CD8-positive, alpha-beta memory T cell (primary cell): ENCODE measurements at regions of chr1 and their contacts with region 1.

Region 1: DNA sequence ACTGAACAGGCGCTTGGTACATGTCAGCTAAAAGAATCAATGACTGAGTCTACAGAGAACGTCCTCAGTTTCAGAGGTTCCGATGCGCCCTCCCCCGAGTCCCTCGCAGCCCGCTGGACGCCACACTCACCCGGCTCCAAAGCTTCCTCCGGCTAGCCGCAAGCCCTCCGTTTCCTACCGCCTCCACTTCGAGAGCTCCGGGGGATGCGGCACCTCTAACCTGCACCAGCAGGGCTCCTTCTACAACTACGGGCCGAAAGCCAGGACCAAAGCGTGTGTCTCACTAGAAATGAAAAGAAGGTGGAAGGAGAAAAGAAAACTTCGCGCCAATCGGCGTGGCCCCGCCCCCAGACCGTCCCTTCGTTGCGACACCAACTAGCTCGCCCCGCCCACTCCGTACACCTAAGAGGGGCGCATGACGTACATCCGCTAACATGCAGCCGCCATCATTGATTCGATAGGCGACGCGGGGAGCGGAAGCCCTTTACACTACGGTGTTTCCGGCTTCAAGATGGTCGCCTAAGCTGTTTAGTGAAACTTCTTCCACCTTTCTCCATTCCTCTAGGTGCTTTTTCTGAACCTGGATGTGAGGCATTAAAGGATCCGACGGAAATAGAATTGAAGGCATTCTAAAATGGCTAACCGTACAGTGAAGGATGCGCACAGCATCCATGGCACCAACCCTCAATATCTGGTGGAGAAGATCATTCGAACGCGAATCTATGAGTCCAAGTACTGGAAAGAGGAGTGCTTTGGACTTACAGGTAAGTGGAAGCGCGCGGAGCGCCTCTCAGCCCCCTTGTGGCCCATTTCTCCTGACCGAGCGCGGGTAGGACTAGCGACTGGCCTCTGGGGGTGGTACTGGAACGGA is at the starts of genes ORC1 and PRPF38A:
- DNase-seq: peak; percentile 94 to 98 (median 96)
- H3K4me3 ChIP-seq: peak within 1 kb of the TSS; percentile 99
- H3K4me3 Mint-ChIP-seq: peak within 1 kb of the TSS; percentile 98 to 100 (median 99)
- H3K27ac ChIP-seq: peak within 1 kb of the TSS; percentile 98
- H3K27ac Mint-ChIP-seq: peak within 1 kb of the TSS; percentile 92 to 100 (median 99)
- H3K4me1 ChIP-seq: peaks cover 18% of the 10 kb centered on the region
- H3K4me1 Mint-ChIP-seq: peaks cover 37 to 51% (median 47%) of the 10 kb centered on the region in 3 donors
- H3K27me3 ChIP-seq: no peaks in the 10 kb centered on the region
- H3K27me3 Mint-ChIP-seq: peaks cover 0 to 2% of the 10 kb centered on the region in 2 donors
- total RNA-seq, gene ORC1: 39.8 to 40.6 TPM
- total RNA-seq, gene PRPF38A: 123 to 126 TPM

Region 2: DNA sequence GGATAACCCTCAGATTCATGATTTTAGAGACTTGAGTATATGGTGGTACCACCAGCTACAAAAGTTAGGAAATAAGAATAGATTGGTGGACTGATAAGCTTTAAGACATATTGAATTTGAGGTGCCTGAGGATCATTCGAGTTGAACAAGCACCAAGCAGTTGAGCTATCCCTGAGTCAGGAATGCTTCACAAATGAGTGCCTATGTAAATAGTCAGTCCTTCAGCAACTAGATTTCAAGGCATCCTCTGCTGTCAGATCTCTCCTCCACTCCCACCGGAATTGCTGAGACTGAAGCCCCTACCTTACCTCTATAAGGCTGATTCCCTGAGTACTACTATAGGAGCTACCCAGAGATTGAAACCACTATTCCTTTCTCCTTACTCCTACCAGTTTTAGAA is 341.2 kb before region 1 on chr1:
- CTCF ChIA-PET with region 1: no interaction called
- POLR2A ChIA-PET with region 1: no interaction called
- DNase-seq: no peak
- H3K4me3 ChIP-seq: no peak overlapping the region
- H3K4me3 Mint-ChIP-seq: no peak overlapping the region
- H3K27ac ChIP-seq: no peak overlapping the region
- H3K27ac Mint-ChIP-seq: peak overlapping the region in 1 of 8 donors; percentile 31
- H3K4me1 ChIP-seq: peaks cover 8% of the 10 kb centered on the region
- H3K4me1 Mint-ChIP-seq: peaks cover 20 to 51% (median 51%) of the 10 kb centered on the region in 3 donors
- H3K27me3 ChIP-seq: no peaks in the 10 kb centered on the region
- H3K27me3 Mint-ChIP-seq: no peaks in the 10 kb centered on the region

Region 3: GRCh38 chr1:52424231-52424636 is 19.9 kb after region 1 on chr1:
- CTCF ChIA-PET with region 1: interaction called, 12 read pairs
- POLR2A ChIA-PET with region 1: interaction called, 24 read pairs
- DNase-seq: peak in 3 of 5 donors; percentile 24 to 69 (median 64)
- H3K4me3 ChIP-seq: peak overlapping the region; percentile 23
- H3K4me3 Mint-ChIP-seq: peak overlapping the region; percentile 15 to 87 (median 74)
- H3K27ac ChIP-seq: peak overlapping the region; percentile 73
- H3K27ac Mint-ChIP-seq: peak overlapping the region; percentile 91 to 99 (median 96)
- H3K4me1 ChIP-seq: peaks cover 37% of the 10 kb centered on the region
- H3K4me1 Mint-ChIP-seq: peaks cover 32 to 49% (median 46%) of the 10 kb centered on the region in 3 donors
- H3K27me3 ChIP-seq: no peaks in the 10 kb centered on the region
- H3K27me3 Mint-ChIP-seq: no peaks in the 10 kb centered on the region